RWPE1 (cell line): ENCODE measurements at regions of chr4 and their contacts with region 1.

Region 1: DNA sequence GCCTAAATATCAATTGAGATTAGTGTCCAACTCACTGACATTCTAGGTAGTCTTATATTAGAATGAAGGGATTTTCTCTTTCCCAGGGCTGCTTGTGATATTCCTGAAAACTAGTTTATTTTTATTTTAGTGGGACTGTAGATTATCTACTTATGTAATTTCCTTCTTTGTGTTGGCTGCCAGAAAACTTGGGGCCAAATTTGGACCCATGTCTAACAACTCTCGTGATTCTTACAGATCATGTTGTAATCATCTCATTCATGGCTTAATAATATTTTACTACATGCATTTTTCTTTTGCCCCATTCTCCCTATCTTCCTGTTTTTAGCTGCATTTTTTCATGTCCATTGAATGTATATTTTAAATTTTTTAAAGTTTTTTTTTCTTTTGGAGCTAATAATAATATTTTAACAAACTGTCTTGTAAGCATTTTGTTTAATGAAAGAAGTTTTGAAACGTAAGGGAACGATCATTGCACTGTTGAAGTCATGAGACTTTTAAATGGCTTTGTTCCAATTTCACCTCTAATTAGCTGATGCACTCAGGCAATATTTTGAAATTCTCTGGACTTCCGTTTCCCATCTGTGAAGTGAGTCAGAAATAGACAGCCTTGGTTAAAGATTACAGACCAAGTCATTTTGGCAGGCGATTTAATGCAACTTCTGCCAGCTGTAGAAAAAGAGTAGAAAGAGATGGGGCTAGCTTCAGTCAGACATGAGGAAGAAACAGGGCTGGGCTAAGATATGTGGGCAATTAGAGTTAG is 14.3 kb upstream of the TDO2 start:
- DNase-seq: peak; percentile 34
- H3K27ac ChIP-seq: no peak overlapping the region
- CTCF ChIP-seq: no peak

Region 2: DNA sequence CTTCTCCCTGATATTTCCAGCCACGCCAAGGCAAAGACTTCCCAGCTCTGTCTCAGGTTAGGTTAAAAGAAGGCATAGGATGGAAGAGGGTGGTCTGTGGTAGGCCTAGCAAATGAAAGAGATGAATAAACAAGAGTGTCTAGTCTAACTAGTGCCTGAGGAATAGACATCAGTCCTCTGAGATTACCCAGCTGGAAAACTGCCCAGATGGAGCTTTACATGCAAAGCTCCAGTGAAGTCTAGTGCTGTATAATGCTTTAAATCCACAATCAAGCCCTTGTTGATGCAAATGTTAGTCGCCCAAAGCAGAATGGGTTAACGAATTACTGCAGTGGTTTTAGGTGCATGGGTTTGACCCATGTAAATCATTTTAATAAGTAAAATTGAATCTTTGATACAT is 155.1 kb before region 1 on chr4:
- CTCF ChIA-PET with region 1: no interaction called
- POLR2A ChIA-PET with region 1: no interaction called
- DNase-seq: no peak
- H3K27ac ChIP-seq: no peak overlapping the region
- CTCF ChIP-seq: no peak

Region 3: DNA sequence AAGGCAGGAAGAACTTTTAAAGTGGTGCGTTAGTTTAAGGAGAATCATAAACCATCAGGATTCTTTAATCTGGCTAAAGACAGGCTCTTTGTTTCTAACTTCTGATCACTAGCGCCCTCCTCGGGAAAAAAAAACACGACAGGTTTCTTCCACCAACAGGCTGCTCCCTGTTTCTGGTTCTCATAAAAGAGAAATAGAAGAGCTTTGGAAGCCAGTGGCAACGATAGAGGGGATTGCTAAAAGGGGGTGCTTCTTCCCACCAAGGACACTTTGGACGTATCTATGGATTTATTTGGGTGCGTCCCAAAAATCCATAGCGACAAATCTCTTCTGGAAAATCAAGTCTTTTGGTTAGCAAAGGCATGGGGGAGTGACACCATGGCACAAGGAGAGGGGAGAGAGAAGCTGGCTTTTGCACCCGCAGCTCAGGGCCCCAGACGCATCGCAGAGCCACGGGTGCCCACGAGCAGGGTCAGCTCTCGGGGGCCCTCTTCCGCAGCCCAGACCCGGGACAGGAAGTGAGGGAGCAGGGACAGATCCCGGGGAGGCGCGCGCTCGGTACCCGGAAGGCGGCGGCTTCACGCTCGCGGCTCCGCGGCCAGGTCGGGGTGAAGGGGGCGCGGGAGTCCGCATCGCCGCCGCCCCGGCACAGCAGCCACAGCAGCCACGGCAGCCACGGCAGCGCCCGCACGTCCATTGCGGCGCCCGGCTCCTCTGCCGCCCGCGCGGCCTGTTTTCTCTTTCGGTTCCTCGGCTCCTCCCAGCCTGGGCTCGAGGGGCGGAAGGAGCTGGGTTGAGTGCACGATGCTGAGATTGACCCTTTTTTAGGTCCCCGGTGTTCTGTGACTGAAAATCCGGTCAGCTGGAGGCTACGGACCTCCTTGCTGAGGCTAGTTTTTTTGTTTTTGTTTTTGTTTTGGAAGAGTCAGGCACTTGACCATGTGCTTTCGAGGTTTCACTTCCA is 64.2 kb after region 1 on chr4 and contains the start of gene CTSO:
- CTCF ChIA-PET with region 1: interaction called, 10 read pairs
- POLR2A ChIA-PET with region 1: no interaction called
- DNase-seq: peak; percentile 56
- H3K27ac ChIP-seq: peak within 1 kb of the TSS; percentile 89
- CTCF ChIP-seq: peak; percentile 69